HepG2 (cell line): ENCODE measurements at regions of chr11 and their contacts with region 1.

Region 1: GRCh38 chr11:22634897-22635629 is 9.4 kb upstream of the FANCF start:
- DNase-seq: peak; percentile 96
- ATAC-seq: peak; percentile 97
- H3K4me3 ChIP-seq: peak overlapping the region in 2 of 3 experiments; percentile 17 to 60; a peak in 3 of 6 replicates
- H3K27ac ChIP-seq: peak overlapping the region; percentile 76
- H3K4me1 ChIP-seq: peaks cover 34% of the 10 kb centered on the region
- H3K27me3 ChIP-seq: no peaks in the 10 kb centered on the region
- CTCF ChIP-seq: no peak
- EP300 ChIP-seq: peak; percentile 47 to 77; a peak in 3 of 4 replicates
- POLR2A ChIP-seq: peak in 1 of 2 experiments; percentile 58; a peak in 3 of 4 replicates
- RAD21 ChIP-seq: no peak

Region 2: GRCh38 chr11:22657101-22657694 is 22.1 kb after region 1 on chr11:
- CTCF ChIA-PET with region 1: no interaction called
- POLR2A ChIA-PET with region 1: interaction called, 12 read pairs
- in situ Hi-C with region 1: no loop called
- intact Hi-C with region 1: no loop called
- DNase-seq: no peak
- ATAC-seq: peak; percentile 51; the same call in 2 of the 3 replicates
- H3K4me3 ChIP-seq: no peak overlapping the region
- H3K27ac ChIP-seq: no peak overlapping the region
- H3K4me1 ChIP-seq: peaks cover 12% of the 10 kb centered on the region
- H3K27me3 ChIP-seq: no peaks in the 10 kb centered on the region
- CTCF ChIP-seq: no peak
- EP300 ChIP-seq: no peak
- POLR2A ChIP-seq: no peak
- RAD21 ChIP-seq: no peak

Region 3: GRCh38 chr11:22666688-22667439 is 31.8 kb after region 1 on chr11:
- CTCF ChIA-PET with region 1: no interaction called
- POLR2A ChIA-PET with region 1: interaction called, 24 read pairs
- in situ Hi-C with region 1: no loop called
- intact Hi-C with region 1: loop called (anchors 1 kb)
- DNase-seq: peak; percentile 53
- ATAC-seq: peak; percentile 98
- H3K4me3 ChIP-seq: peak overlapping the region; percentile 74 to 90 (median 86)
- H3K27ac ChIP-seq: peak overlapping the region; percentile 87
- H3K4me1 ChIP-seq: peaks cover 58% of the 10 kb centered on the region
- H3K27me3 ChIP-seq: no peaks in the 10 kb centered on the region; a peak in 1 of 5 replicates
- CTCF ChIP-seq: 0 out of 2 replicates have a peak, but pooled peaks have one; percentile 8
- EP300 ChIP-seq: no peak; a peak in 1 of 4 replicates
- POLR2A ChIP-seq: peak; percentile 62 to 64; a peak in 3 of 4 replicates
- RAD21 ChIP-seq: peak; percentile 59

Region 4: GRCh38 chr11:22674470-22675439 is 39.7 kb after region 1 on chr11:
- CTCF ChIA-PET with region 1: no interaction called
- POLR2A ChIA-PET with region 1: interaction called, 9 read pairs
- in situ Hi-C with region 1: no loop called
- intact Hi-C with region 1: loop called (anchors 2 kb)
- DNase-seq: peak; percentile 93
- ATAC-seq: peak; percentile 97
- H3K4me3 ChIP-seq: peak overlapping the region; percentile 42 to 63 (median 44)
- H3K27ac ChIP-seq: peak overlapping the region; percentile 98
- H3K4me1 ChIP-seq: peaks cover 95% of the 10 kb centered on the region
- H3K27me3 ChIP-seq: no peaks in the 10 kb centered on the region
- CTCF ChIP-seq: no peak
- EP300 ChIP-seq: peak in 1 of 2 experiments; percentile 87; a peak in 2 of 4 replicates
- POLR2A ChIP-seq: peak; percentile 33 to 36; a peak in 1 of 4 replicates
- RAD21 ChIP-seq: no peak

Region 5: DNA sequence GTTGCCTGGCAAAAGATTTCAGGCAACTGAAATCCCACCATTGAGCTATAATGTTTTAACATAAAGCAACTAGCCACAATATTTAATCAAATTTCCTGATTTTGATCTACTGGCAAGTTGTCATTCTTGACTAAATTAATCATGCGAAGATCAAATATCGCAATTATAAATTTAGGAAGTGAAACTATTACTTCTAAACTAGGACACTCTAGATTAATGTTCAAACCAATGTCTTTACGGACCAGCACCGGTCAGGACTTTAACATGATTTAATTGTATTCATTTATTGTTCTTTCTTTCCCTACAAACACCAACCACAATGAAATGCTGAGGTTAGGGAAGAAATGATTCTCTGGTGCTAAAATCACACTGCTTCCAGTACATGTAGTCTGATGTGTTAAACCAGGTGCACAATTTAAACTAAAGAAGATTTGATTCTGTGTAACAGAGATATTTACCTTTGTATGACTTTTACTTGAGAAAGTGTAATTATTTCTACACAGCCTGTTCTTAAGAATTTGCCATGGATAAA is 46.3 kb after region 1 on chr11:
- CTCF ChIA-PET with region 1: no interaction called
- POLR2A ChIA-PET with region 1: interaction called, 7 read pairs
- in situ Hi-C with region 1: no loop called
- intact Hi-C with region 1: loop called (anchors 2 kb)
- DNase-seq: no peak
- ATAC-seq: no peak
- H3K4me3 ChIP-seq: no peak overlapping the region
- H3K27ac ChIP-seq: peak overlapping the region; percentile 96
- H3K4me1 ChIP-seq: peaks cover 52% of the 10 kb centered on the region
- H3K27me3 ChIP-seq: no peaks in the 10 kb centered on the region
- CTCF ChIP-seq: no peak
- EP300 ChIP-seq: no peak
- POLR2A ChIP-seq: no peak
- RAD21 ChIP-seq: no peak

Region 6: GRCh38 chr11:22730319-22730718 is 95.3 kb after region 1 on chr11:
- CTCF ChIA-PET with region 1: no interaction called
- POLR2A ChIA-PET with region 1: interaction called, 4 read pairs
- in situ Hi-C with region 1: no loop called
- intact Hi-C with region 1: loop called (anchors 1 kb)
- DNase-seq: peak; percentile 59
- ATAC-seq: peak; percentile 56
- H3K4me3 ChIP-seq: no peak overlapping the region
- H3K27ac ChIP-seq: no peak overlapping the region
- H3K4me1 ChIP-seq: peaks cover 10% of the 10 kb centered on the region
- H3K27me3 ChIP-seq: no peaks in the 10 kb centered on the region
- CTCF ChIP-seq: peak; percentile 35
- EP300 ChIP-seq: no peak
- POLR2A ChIP-seq: no peak
- RAD21 ChIP-seq: peak; percentile 48

Region 7: DNA sequence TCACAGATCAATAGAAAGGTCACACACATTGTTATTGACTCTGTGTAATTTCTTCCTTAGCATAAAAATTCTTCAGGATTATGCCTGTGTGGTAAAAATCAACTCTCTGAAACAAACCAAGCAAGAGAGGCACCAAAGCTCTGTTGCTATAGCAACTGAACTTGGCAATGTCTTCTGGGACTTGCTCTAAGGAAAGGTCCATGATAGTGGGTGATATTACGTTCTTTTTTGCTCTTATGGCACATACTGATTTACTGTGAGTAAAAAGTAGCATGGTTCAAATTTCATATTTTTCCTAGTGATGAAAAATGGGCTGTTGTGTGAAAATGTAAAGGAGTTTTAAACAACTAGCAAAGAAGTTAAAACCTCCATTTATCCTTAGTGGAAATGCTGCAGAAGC is 128.1 kb after region 1 on chr11:
- CTCF ChIA-PET with region 1: no interaction called
- POLR2A ChIA-PET with region 1: no interaction called
- in situ Hi-C with region 1: no loop called
- intact Hi-C with region 1: no loop called
- DNase-seq: no peak
- ATAC-seq: no peak
- H3K4me3 ChIP-seq: no peak overlapping the region
- H3K27ac ChIP-seq: no peak overlapping the region
- H3K4me1 ChIP-seq: no peaks in the 10 kb centered on the region
- H3K27me3 ChIP-seq: no peaks in the 10 kb centered on the region
- CTCF ChIP-seq: no peak
- EP300 ChIP-seq: no peak
- POLR2A ChIP-seq: no peak
- RAD21 ChIP-seq: no peak

Region 8: GRCh38 chr11:22822203-22822602 is 187.1 kb after region 1 on chr11:
- CTCF ChIA-PET with region 1: no interaction called
- POLR2A ChIA-PET with region 1: no interaction called
- in situ Hi-C with region 1: no loop called
- intact Hi-C with region 1: loop called (anchors 2 kb)
- DNase-seq: no peak
- ATAC-seq: no peak
- H3K4me3 ChIP-seq: no peak overlapping the region
- H3K27ac ChIP-seq: no peak overlapping the region
- H3K4me1 ChIP-seq: no peaks in the 10 kb centered on the region
- H3K27me3 ChIP-seq: no peaks in the 10 kb centered on the region
- CTCF ChIP-seq: no peak
- EP300 ChIP-seq: no peak
- POLR2A ChIP-seq: no peak
- RAD21 ChIP-seq: no peak